ENCODE measurements at regions of chr11 and their contacts with region 1.

Region 1: DNA sequence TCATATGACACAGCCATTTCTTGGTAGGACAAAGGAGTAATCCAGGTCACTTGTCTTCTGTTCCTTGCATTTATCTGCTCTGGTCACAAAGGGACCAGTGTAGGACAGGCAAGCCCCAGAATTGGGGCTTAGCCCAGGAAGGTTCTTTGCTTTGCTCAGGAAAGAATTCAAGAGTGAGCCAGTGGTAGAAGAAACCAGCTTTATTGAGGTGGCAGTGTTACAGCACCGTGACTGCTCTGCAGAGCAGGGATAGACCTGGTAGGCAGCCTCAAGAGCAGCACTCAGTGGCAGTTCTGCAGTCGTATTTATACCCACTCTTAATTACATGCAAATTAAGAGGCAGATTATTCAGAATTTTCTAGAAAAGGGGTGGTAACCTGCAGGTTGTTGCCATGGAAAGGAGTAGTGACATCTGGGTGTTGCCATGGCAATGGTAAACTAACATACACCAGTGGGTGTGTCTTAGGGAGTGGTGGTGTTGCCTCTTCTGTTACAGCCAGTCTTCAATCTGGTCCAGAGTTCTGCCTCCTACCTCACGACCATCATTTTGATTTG is 84.9 kb upstream of the RAB1B start:
- DNase-seq: no peak
- CTCF ChIP-seq: no peak

Region 2: GRCh38 chr11:65997286-65997685 is 186.3 kb before region 1 on chr11:
- CTCF ChIA-PET with region 1: no interaction called
- POLR2A ChIA-PET with region 1: no interaction called
- DNase-seq: no peak
- CTCF ChIP-seq: no peak

Region 3: GRCh38 chr11:66172143-66172542 is 11.4 kb before region 1 on chr11:
- CTCF ChIA-PET with region 1: no interaction called
- POLR2A ChIA-PET with region 1: no interaction called
- DNase-seq: no peak
- CTCF ChIP-seq: no peak

Region 4: DNA sequence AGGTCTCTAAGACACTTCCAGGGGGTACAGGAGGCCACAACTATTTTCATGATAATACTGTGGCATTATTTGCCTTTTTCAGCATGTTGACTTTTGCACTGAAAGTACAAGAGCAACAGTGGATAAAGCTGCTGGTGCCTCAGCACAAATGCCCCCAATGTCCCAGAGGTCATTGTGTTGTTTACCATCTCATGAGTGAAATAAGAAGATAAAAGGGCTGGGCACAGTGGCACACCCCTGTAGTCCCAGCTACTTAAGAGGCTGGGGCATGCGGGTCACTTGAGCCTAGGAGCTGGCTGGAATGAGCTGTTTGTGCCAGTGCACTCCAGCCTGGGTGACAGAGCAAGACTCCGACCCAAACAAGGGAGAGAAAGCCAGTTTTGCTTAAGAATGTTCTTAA is 12.3 kb after region 1 on chr11:
- CTCF ChIA-PET with region 1: interaction called, 13 read pairs
- POLR2A ChIA-PET with region 1: no interaction called
- DNase-seq: no peak
- CTCF ChIP-seq: no peak